ENCODE measurements at regions of chr3 and their contacts with region 1.

Region 1: GRCh38 chr3:112579697-112580096 is 17.9 kb downstream of the SLC35A5 start:
- DNase-seq: no peak
- H3K4me3 ChIP-seq: no peak overlapping the region
- H3K27ac ChIP-seq: no peak overlapping the region
- H3K4me1 ChIP-seq: peaks cover 9% of the 10 kb centered on the region
- CTCF ChIP-seq: no peak

Region 2: GRCh38 chr3:112568642-112569041 is 11.1 kb before region 1 on chr3:
- CTCF ChIA-PET with region 1: no interaction called
- POLR2A ChIA-PET with region 1: interaction called, 13 read pairs
- intact Hi-C with region 1: no loop called
- DNase-seq: no peak
- H3K4me3 ChIP-seq: no peak overlapping the region
- H3K27ac ChIP-seq: no peak overlapping the region
- H3K4me1 ChIP-seq: peaks cover 4% of the 10 kb centered on the region
- CTCF ChIP-seq: no peak

Region 3: DNA sequence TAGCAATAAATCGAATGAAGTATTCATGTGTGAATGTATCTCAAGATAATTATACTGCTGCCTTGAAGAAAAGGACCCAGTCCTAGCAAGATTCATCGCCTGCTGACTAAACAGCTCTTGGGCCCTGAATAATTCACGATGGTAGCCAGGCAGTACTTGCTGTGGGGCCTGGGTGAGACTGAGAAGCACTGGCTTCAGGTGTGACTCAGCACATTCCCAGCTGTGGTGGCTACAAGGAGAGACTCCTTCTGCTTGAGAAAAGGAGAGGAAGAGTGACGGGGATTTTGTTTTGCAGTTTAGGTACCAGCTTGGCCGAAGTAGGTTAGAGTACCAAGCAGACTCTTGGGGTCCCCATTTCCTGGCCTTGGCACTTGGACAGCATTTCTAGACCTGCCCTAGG is 314.6 kb after region 1 on chr3:
- CTCF ChIA-PET with region 1: no interaction called
- POLR2A ChIA-PET with region 1: no interaction called
- intact Hi-C with region 1: no loop called
- DNase-seq: no peak
- H3K4me3 ChIP-seq: no peak overlapping the region
- H3K27ac ChIP-seq: no peak overlapping the region
- H3K4me1 ChIP-seq: peaks cover 2% of the 10 kb centered on the region
- CTCF ChIP-seq: no peak

Measured in OCI-LY7 (cell line).